ENCODE measurements at regions of chr12 and their contacts with region 1.

Region 1: DNA sequence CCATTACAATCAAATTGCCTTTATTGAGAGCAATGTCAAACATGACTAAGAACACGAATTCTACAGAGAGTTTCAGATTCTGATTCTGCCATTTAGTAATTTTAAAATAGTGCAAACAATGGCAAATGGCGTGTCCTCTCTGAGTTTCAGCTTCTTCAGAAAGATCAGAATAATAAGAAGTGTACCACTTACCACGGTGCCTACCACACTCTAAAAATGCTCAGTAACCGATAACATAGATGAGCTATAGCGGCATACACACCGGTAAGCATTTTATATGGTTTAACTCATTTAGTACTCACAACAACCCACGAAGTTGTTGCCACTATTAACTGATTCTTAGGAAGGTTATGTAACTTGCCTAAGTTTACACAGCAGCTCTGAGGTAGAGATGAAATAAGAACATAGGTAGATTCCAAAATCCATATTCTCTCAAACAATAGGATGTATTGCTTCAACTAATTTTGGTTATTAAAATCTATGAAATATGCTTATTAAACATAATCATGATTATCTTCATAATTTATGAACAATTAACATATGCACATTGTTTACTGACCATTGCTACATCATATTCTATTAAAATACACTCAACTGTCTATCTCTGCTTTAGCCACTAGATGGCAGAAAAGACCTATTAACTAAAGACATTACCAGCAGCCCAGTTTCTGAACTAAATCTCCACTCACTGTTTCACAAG is 38.3 kb downstream of the SLC6A15 start:
- DNase-seq: no peak
- H3K4me3 ChIP-seq: no peak overlapping the region
- H3K27ac ChIP-seq: no peak overlapping the region
- H3K4me1 ChIP-seq: no peaks in the 10 kb centered on the region
- H3K27me3 ChIP-seq: no peaks in the 10 kb centered on the region
- CTCF ChIP-seq: peak; percentile 49 to 79 (median 61)
- POLR2A ChIP-seq: no peak

Region 2: DNA sequence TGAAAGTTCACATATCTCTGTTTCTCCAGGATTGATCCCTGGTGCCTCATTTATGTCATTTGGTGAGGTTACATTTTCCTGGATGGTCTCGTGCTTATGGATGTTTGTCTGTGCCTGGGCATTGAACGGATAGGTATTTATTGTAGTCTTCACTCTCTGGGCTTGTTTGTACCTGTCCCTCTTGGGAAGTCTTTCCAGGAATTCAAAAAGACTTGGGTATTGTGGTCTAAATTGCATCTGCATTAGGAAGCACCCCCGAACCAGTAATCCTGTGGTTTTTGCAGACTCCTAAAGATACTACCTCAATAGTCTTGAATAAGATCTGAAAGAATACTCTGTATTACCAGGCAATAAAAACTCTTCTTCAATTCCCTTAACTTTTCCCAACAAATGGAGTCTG is 682.5 kb before region 1 on chr12:
- intact Hi-C with region 1: no loop called
- DNase-seq: no peak
- H3K4me3 ChIP-seq: no peak overlapping the region
- H3K27ac ChIP-seq: no peak overlapping the region
- H3K4me1 ChIP-seq: no peaks in the 10 kb centered on the region
- H3K27me3 ChIP-seq: no peaks in the 10 kb centered on the region
- CTCF ChIP-seq: no peak
- POLR2A ChIP-seq: no peak

Region 3: GRCh38 chr12:85029456-85029855 is 155.2 kb after region 1 on chr12:
- intact Hi-C with region 1: loop called (anchors 10 kb)
- DNase-seq: no peak
- H3K4me3 ChIP-seq: no peak overlapping the region
- H3K27ac ChIP-seq: no peak overlapping the region
- H3K4me1 ChIP-seq: no peaks in the 10 kb centered on the region
- H3K27me3 ChIP-seq: no peaks in the 10 kb centered on the region
- CTCF ChIP-seq: peak in 2 of 3 experiments; percentile 36 to 63
- POLR2A ChIP-seq: no peak

Measured in testis (tissue), 5 donors.